ENCODE measurements at regions of chr19 and their contacts with region 1.

Region 1: GRCh38 chr19:49391581-49392399 is 3.7 kb downstream of the KASH5 start:
- DNase-seq: peak; percentile 86
- ATAC-seq: peak; percentile 96
- H3K4me3 Mint-ChIP-seq: no peak overlapping the region
- H3K27ac Mint-ChIP-seq: peak overlapping the region; percentile 22
- H3K4me1 Mint-ChIP-seq: peaks cover 24% of the 10 kb centered on the region
- H3K27me3 Mint-ChIP-seq: peaks cover 4% of the 10 kb centered on the region

Region 2: GRCh38 chr19:49150106-49150943 is 241.5 kb before region 1 on chr19:
- CTCF ChIA-PET with region 1: no interaction called
- POLR2A ChIA-PET with region 1: no interaction called
- DNase-seq: peak; percentile 52
- ATAC-seq: peak; percentile 28
- H3K4me3 Mint-ChIP-seq: peak overlapping the region; percentile 73
- H3K27ac Mint-ChIP-seq: no peak overlapping the region
- H3K4me1 Mint-ChIP-seq: peaks cover 38% of the 10 kb centered on the region
- H3K27me3 Mint-ChIP-seq: peaks cover 62% of the 10 kb centered on the region

Region 3: DNA sequence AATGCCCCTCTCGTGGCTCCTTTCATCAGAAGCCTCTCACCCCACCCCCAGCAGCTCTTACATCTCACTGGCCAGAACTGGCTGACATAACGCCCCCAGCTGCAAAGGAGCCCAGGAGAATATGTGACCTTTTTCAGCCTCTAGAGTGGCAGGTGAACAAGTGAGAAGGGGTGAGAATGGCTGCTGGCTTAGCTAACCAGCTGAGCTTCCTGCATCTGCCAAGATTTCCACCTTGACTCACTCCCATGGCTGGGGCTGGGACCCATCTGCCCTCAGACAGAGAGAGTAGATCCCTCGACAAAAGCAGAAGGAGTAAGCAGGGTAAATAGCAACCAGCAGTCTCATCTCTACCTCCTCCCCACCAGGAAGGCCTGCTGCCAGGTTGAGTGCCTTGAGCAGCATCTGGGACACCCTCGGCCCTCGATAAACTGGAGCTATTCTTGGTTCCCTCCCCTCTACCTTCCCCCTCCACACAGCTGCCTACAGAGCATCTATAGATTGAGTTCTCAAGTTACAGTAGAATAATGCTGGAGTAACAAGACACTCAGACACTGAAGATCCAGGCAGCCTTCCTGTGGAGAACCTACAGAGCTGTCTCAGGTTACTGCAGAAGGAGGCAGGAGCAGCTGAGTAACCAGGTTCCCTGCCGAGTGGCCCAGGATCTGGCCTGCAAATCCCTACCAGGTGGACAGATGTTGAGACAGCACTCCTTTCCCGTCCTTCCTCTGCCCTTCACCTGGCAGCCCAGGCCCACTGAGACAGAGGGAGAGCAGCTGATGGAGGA is 11.8 kb after region 1 on chr19:
- CTCF ChIA-PET with region 1: interaction called, 52 read pairs
- POLR2A ChIA-PET with region 1: no interaction called
- DNase-seq: no peak
- ATAC-seq: no peak
- H3K4me3 Mint-ChIP-seq: no peak overlapping the region
- H3K27ac Mint-ChIP-seq: no peak overlapping the region
- H3K4me1 Mint-ChIP-seq: peaks cover 30% of the 10 kb centered on the region
- H3K27me3 Mint-ChIP-seq: peaks cover under 1% of the 10 kb centered on the region

Region 4: GRCh38 chr19:49421039-49421877 is 29.5 kb after region 1 on chr19:
- CTCF ChIA-PET with region 1: interaction called, 20 read pairs
- POLR2A ChIA-PET with region 1: interaction called, 3 read pairs
- DNase-seq: peak; percentile 55
- ATAC-seq: peak; percentile 12
- H3K4me3 Mint-ChIP-seq: peak overlapping the region; percentile 26
- H3K27ac Mint-ChIP-seq: no peak overlapping the region
- H3K4me1 Mint-ChIP-seq: peaks cover 49% of the 10 kb centered on the region
- H3K27me3 Mint-ChIP-seq: peaks cover 77% of the 10 kb centered on the region

Region 5: GRCh38 chr19:49436369-49437017 is 44.7 kb after region 1 on chr19:
- CTCF ChIA-PET with region 1: interaction called, 40 read pairs
- POLR2A ChIA-PET with region 1: no interaction called
- DNase-seq: peak; percentile 76
- ATAC-seq: peak; percentile 46
- H3K4me3 Mint-ChIP-seq: no peak overlapping the region
- H3K27ac Mint-ChIP-seq: no peak overlapping the region
- H3K4me1 Mint-ChIP-seq: peaks cover 26% of the 10 kb centered on the region
- H3K27me3 Mint-ChIP-seq: peaks cover 79% of the 10 kb centered on the region

Region 6: DNA sequence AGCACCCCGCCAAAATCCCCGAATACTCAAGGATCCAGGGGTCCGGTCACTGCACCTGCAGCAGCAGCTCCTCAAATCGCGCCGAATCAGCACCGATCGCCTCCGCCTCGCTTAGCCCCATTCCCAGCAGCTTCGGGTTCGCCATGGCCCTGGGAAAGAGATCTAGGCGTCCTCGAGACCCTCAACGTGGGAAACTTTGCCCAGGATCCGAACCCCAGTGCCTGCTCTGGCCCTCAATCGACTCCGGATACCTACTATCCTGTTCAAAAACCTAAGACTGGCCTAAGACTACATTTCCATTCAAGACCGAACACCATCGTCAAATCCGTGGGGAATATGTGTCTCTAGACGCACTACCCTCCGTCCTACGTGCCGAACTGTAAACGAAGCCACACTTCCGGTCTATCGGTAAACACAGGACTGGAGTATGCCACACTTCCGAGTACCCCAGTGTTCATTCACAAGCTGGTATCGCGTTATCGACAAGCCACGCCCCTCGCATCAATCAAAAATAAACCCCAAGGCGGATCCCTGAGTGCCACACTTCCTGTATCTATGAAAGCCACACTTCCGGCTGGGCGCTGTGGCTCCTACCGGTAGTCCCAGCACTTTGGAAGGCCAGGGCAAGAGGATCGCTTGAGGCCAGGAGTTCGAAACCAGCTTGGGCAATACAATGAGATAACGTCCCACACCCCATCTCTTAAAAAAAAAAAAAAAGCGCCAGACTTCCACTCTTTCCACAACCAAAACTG is 59.8 kb after region 1 on chr19 and contains the start of gene PIH1D1:
- CTCF ChIA-PET with region 1: interaction called, 23 read pairs
- POLR2A ChIA-PET with region 1: interaction called, 4 read pairs
- DNase-seq: peak; percentile 99
- ATAC-seq: peak; percentile 67
- H3K4me3 Mint-ChIP-seq: peak within 1 kb of the TSS; percentile 93
- H3K27ac Mint-ChIP-seq: peak within 1 kb of the TSS; percentile 100
- H3K4me1 Mint-ChIP-seq: peaks cover 62% of the 10 kb centered on the region
- H3K27me3 Mint-ChIP-seq: no peaks in the 10 kb centered on the region
- total RNA-seq, gene PIH1D1: 128 to 129 TPM

Region 7: GRCh38 chr19:49473868-49474544 is 82.2 kb after region 1 on chr19 and contains the start of gene FLT3LG:
- CTCF ChIA-PET with region 1: interaction called, 51 read pairs
- POLR2A ChIA-PET with region 1: no interaction called
- DNase-seq: peak; percentile 99
- ATAC-seq: peak; percentile 69
- H3K4me3 Mint-ChIP-seq: peak within 1 kb of the TSS; percentile 94
- H3K27ac Mint-ChIP-seq: peak within 1 kb of the TSS; percentile 94
- H3K4me1 Mint-ChIP-seq: peaks cover 60% of the 10 kb centered on the region
- H3K27me3 Mint-ChIP-seq: no peaks in the 10 kb centered on the region
- total RNA-seq, gene FLT3LG: 280 to 297 TPM

Region 8: GRCh38 chr19:49590071-49590970 is 198.5 kb after region 1 on chr19:
- CTCF ChIA-PET with region 1: no interaction called
- POLR2A ChIA-PET with region 1: no interaction called
- DNase-seq: peak; percentile 98
- ATAC-seq: peak; percentile 85
- H3K4me3 Mint-ChIP-seq: peak overlapping the region; percentile 80
- H3K27ac Mint-ChIP-seq: peak overlapping the region; percentile 92
- H3K4me1 Mint-ChIP-seq: peaks cover 31% of the 10 kb centered on the region
- H3K27me3 Mint-ChIP-seq: peaks cover 2% of the 10 kb centered on the region